Activated B cell treated with CpG ODN at 0.5 μM for 24 hours (primary cell): ENCODE measurements at regions of chr12 and their contacts with region 1.

Region 1: DNA sequence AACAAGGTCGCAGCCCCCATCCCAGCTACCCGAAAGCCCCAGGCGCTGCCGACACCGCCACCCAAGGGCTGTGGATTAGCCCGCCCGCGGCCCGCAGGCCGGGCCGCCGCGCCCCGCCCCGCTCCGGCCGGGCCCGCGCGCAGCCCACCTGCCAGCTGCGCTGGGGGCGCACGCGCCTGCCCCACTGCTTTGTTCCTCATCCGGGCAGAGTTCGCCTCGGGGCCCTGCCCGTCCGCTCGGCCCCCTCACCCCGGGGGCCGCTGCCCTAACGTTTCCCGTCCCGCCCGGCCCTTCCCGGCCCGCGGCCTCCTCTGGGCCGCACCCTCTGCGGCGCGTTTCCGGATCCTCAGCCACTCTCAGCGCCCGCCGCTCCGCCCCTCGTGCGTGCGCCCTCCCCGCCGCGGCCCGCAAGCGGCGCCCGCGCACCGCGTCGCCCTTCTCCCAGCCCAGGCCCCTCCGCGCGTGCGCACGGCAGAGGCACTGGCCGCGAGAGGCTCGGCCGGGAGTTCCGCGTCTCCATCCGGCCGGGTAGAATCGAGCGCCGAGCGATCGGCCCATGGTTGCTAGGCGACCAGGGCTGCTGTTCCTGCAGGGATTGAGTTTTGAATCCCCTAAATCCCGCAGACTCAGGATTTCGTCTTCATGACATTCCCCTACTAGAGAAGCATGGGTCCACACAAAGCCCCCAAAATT is at the start of gene PRDM4:
- DNase-seq: peak; percentile 93
- ATAC-seq: peak; percentile 91
- H3K4me3 Mint-ChIP-seq: peak within 1 kb of the TSS; percentile 89
- H3K27ac Mint-ChIP-seq: peak within 1 kb of the TSS; percentile 86
- H3K4me1 Mint-ChIP-seq: peaks cover 33% of the 10 kb centered on the region
- H3K27me3 Mint-ChIP-seq: no peaks in the 10 kb centered on the region
- CTCF ChIP-seq: no peak
- total RNA-seq, gene PRDM4: 37.8 and 45.2 TPM in 2 replicates

Region 2: DNA sequence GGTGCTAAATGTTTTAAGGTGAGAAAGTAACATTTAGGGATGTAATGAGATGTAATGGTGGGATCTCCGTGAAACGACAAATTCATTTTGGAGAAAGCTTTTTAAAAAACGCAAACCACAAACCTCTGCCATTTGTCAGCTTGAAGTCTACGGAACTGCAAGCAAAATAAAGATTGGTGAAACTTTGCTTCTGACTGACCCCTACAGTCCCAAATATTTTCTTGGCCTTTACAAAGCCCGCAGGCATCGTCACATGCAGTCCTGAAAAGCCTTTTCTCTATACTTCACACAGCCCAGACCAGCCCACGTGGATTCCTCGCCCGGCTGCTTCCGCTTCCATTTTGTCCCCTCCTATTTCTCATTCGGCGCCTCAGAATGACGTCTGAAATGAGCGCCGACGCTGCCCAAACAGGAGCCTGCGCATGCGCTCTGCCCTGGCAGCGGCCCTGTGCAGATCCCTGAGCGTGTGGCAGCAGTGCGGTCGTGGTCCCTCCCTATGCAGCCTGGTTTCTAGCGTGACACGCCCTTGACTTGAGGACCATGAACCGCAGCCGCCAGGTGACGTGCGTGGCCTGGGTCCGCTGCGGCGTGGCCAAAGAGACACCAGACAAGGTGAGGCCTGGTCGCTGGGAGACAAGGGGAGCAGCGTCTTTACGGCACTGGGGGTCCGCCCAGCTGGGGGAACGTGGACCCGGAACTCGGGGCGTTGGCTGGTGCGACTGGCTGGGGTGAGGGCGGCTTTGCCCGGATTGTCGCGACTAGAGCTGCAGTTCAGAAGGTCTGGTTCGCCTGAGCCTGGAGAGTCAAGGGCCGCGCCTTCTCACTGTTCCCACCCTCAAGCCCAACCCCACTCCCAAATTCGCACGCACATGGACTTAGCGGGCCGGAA is 75.4 kb before region 1 on chr12 and contains the start of gene PWP1:
- CTCF ChIA-PET with region 1: no interaction called
- POLR2A ChIA-PET with region 1: interaction called, 4 read pairs
- intact Hi-C with region 1: loop called (anchors 1 kb)
- DNase-seq: peak; percentile 93
- ATAC-seq: peak; percentile 90
- H3K4me3 Mint-ChIP-seq: peak within 1 kb of the TSS; percentile 96
- H3K27ac Mint-ChIP-seq: peak within 1 kb of the TSS; percentile 97
- H3K4me1 Mint-ChIP-seq: peaks cover 23% of the 10 kb centered on the region
- H3K27me3 Mint-ChIP-seq: no peaks in the 10 kb centered on the region
- CTCF ChIP-seq: no peak
- total RNA-seq, gene PWP1: 49.4 and 53.5 TPM in 2 replicates

Region 3: DNA sequence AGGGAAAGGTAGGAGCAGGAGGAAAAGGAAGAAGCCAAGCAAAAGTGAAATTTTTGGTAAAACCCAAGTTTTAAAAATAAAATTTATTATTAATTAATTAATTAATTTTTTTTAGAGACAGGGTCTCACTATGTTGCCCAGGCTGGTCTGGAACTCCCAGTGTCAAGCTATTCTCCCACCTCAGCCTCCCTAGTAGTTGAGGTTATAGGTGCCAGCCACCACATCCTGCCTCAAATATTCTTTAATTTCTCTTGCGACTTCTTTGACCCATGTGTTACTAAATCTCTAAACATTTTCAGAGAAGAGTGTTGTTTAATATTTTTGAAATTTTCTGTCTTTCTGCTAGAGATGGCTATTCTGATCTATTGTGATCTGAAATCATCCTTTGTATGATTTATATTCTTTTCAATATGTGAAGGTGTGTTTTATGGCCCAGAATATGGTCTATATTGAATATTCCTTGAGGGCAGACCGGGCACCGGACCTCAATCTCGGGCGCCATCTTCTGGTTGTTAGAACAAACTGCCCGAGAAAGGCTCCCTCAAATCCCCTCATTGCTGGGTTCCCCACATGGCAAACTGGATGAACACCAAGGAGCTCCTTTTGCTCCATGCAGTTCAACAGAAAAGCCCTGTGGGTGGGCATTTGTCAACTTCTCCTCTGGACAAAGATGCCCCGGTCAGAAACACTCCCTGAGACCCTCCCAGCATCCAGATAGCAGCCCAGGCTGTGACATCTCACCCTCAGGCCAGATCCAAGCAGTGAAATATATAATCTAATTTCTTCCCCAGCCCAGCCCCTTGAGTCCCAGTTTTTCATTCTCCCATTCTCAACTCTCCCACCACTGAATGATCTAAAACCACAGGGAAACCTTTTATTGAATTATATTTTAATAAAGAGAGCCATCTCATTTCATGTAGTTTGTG is 124.1 kb after region 1 on chr12:
- CTCF ChIA-PET with region 1: interaction called, 11 read pairs
- POLR2A ChIA-PET with region 1: no interaction called
- intact Hi-C with region 1: loop called (anchors 1 kb)
- DNase-seq: peak; percentile 21
- ATAC-seq: peak; percentile 73
- H3K4me3 Mint-ChIP-seq: no peak overlapping the region
- H3K27ac Mint-ChIP-seq: no peak overlapping the region
- H3K4me1 Mint-ChIP-seq: no peaks in the 10 kb centered on the region
- H3K27me3 Mint-ChIP-seq: peaks cover 8% of the 10 kb centered on the region
- CTCF ChIP-seq: peak; percentile 32

Region 4: DNA sequence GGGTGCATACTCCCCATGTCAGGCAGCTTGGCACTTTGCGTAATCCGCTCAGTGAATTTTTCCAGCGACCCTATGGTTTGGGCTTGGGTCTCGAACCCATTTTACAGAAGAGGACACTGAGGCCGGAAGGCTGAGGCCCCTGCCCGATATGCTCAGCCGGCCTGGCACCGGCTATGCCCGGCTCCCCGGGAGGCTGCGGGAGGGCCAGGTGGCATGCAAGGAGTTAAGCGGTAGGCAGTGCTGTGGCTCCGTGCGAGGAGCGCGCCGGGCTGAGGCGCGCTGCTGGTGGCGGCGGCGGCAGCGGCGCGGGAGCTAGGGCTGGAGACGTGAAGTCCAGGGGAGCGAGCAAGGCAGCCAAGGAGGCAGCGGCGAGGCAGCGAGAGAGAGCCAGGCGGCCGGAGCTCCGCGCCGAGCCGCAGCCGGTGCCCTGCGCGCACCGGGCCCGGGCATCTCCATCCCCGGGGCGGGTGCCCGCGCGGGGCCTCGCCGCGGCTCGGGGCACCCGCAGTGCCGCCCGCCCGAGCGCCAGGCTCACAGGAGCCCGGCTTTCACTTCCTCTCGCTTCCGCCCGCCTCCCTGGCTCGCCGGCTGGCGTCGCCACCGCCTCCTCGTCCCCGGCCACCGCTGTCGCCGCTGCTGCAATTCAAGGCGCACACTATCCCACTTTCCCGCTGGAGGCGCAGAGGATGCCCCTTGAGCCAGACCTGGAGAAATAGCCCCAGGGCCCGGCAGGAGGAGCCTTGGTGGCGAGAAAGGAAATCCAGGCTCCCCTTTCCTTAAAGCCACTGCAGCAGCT is 368.3 kb after region 1 on chr12 and contains the start of gene WSCD2:
- CTCF ChIA-PET with region 1: no interaction called
- POLR2A ChIA-PET with region 1: no interaction called
- intact Hi-C with region 1: loop called (anchors 10 kb)
- DNase-seq: peak; percentile 39
- ATAC-seq: peak; percentile 89
- H3K4me3 Mint-ChIP-seq: peak within 1 kb of the TSS; percentile 77
- H3K27ac Mint-ChIP-seq: no peak within 1 kb of the TSS
- H3K4me1 Mint-ChIP-seq: peaks cover 14% of the 10 kb centered on the region
- H3K27me3 Mint-ChIP-seq: peaks cover 29% of the 10 kb centered on the region
- CTCF ChIP-seq: no peak
- total RNA-seq, gene WSCD2: 1.4 and 1.9 TPM in 2 replicates